ENCODE measurements at regions of chr9 and their contacts with region 1.

Region 1: GRCh38 chr9:121686930-121687541 is 35.6 kb downstream of the DAB2IP start:
- DNase-seq: peak; percentile 83 to 85
- H3K4me3 ChIP-seq: no peak overlapping the region
- H3K27ac ChIP-seq: peak overlapping the region; percentile 35 to 65
- H3K4me1 ChIP-seq: peaks cover 0 to 1% of the 10 kb centered on the region in 2 donors
- H3K27me3 ChIP-seq: no peaks in the 10 kb centered on the region
- CTCF ChIP-seq: peak; percentile 80 to 91 (median 86)
- POLR2A ChIP-seq: no peak

Region 2: GRCh38 chr9:121545875-121546423 is 141.1 kb before region 1 on chr9:
- intact Hi-C with region 1: loop called (anchors 10 kb)
- DNase-seq: peak; percentile 95 to 96
- H3K4me3 ChIP-seq: no peak overlapping the region
- H3K27ac ChIP-seq: peak overlapping the region in 1 of 2 donors; percentile 23
- H3K4me1 ChIP-seq: peaks cover 0 to 9% of the 10 kb centered on the region in 2 donors
- H3K27me3 ChIP-seq: no peaks in the 10 kb centered on the region
- CTCF ChIP-seq: peak; percentile 93 to 98 (median 96)
- POLR2A ChIP-seq: no peak